Posterior vena cava (tissue), 2 donors: ENCODE measurements at regions of chr11 and their contacts with region 1.

Region 1: GRCh38 chr11:70073871-70074371 is 4.2 kb upstream of the ANO1 start:
- DNase-seq: peak; percentile 76

Region 2: GRCh38 chr11:69925366-69926196 is 148.3 kb before region 1 on chr11:
- intact Hi-C with region 1: loop called (anchors 5 to 10 kb)
- DNase-seq: peak; percentile 54